ENCODE measurements at regions of chr5 and their contacts with region 1.

Region 1: GRCh38 chr5:157142317-157143126 is at the start of gene MED7:
- DNase-seq: peak; percentile 77 to 99 (median 88)
- ATAC-seq: peak; percentile 95
- H3K4me3 ChIP-seq: peak within 1 kb of the TSS; percentile 98
- H3K4me3 Mint-ChIP-seq: peak within 1 kb of the TSS; percentile 95
- H3K27ac ChIP-seq: peak within 1 kb of the TSS; percentile 88 to 94
- H3K27ac Mint-ChIP-seq: peak within 1 kb of the TSS; percentile 98
- H3K4me1 ChIP-seq: peaks cover 35% of the 10 kb centered on the region
- H3K4me1 Mint-ChIP-seq: peaks cover 57% of the 10 kb centered on the region
- H3K27me3 ChIP-seq: no peaks in the 10 kb centered on the region
- H3K27me3 Mint-ChIP-seq: no peaks in the 10 kb centered on the region
- CTCF ChIP-seq: no peak
- total RNA-seq, gene MED7: 7.0 to 8.7 TPM

Region 2: GRCh38 chr5:156722358-156722757 is 420.2 kb before region 1 on chr5:
- CTCF ChIA-PET with region 1: no interaction called
- POLR2A ChIA-PET with region 1: no interaction called
- intact Hi-C with region 1: no loop called
- DNase-seq: no peak
- ATAC-seq: no peak
- H3K4me3 ChIP-seq: no peak overlapping the region
- H3K4me3 Mint-ChIP-seq: no peak overlapping the region
- H3K27ac ChIP-seq: no peak overlapping the region
- H3K27ac Mint-ChIP-seq: no peak overlapping the region
- H3K4me1 ChIP-seq: no peaks in the 10 kb centered on the region
- H3K4me1 Mint-ChIP-seq: no peaks in the 10 kb centered on the region
- H3K27me3 ChIP-seq: no peaks in the 10 kb centered on the region
- H3K27me3 Mint-ChIP-seq: peaks cover 11% of the 10 kb centered on the region
- CTCF ChIP-seq: no peak

Region 3: GRCh38 chr5:157130925-157131324 is 11.6 kb before region 1 on chr5:
- CTCF ChIA-PET with region 1: interaction called, 7 read pairs
- POLR2A ChIA-PET with region 1: interaction called, 26 read pairs
- intact Hi-C with region 1: no loop called
- DNase-seq: no peak
- ATAC-seq: no peak
- H3K4me3 ChIP-seq: no peak overlapping the region
- H3K4me3 Mint-ChIP-seq: no peak overlapping the region
- H3K27ac ChIP-seq: no peak overlapping the region
- H3K27ac Mint-ChIP-seq: no peak overlapping the region
- H3K4me1 ChIP-seq: peaks cover 8% of the 10 kb centered on the region
- H3K4me1 Mint-ChIP-seq: peaks cover 33% of the 10 kb centered on the region
- H3K27me3 ChIP-seq: no peaks in the 10 kb centered on the region
- H3K27me3 Mint-ChIP-seq: no peaks in the 10 kb centered on the region
- CTCF ChIP-seq: no peak

Region 4: GRCh38 chr5:157189223-157189622 is 46.7 kb after region 1 on chr5:
- CTCF ChIA-PET with region 1: no interaction called
- POLR2A ChIA-PET with region 1: interaction called, 27 read pairs
- intact Hi-C with region 1: no loop called
- DNase-seq: peak in 1 of 14 experiments; percentile 42
- ATAC-seq: no peak
- H3K4me3 ChIP-seq: peak overlapping the region; percentile 85
- H3K4me3 Mint-ChIP-seq: peak overlapping the region; percentile 92
- H3K27ac ChIP-seq: peak overlapping the region; percentile 38 to 67
- H3K27ac Mint-ChIP-seq: peak overlapping the region; percentile 96
- H3K4me1 ChIP-seq: peaks cover 72% of the 10 kb centered on the region
- H3K4me1 Mint-ChIP-seq: peaks cover 92% of the 10 kb centered on the region
- H3K27me3 ChIP-seq: no peaks in the 10 kb centered on the region
- H3K27me3 Mint-ChIP-seq: no peaks in the 10 kb centered on the region
- CTCF ChIP-seq: no peak

Region 5: DNA sequence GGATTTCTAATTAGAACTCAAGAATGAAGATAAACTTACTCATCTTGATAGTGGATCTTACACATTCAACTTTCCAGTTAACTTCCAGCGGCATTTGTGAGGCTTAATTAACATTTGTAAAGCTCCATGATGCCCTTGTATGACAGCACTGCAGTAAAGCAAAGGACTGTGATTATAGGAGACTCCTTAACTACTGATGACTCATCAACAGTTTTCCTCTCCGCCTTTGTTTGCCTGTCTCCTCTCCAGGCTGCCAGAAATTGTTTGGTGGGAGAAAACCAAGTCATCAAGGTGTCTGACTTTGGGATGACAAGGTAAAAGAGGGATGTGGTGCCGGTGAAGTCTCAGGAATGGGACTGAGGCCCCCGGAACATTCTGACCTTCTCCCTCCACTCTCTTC is 103.0 kb after region 1 on chr5:
- CTCF ChIA-PET with region 1: no interaction called
- POLR2A ChIA-PET with region 1: interaction called, 25 read pairs
- intact Hi-C with region 1: loop called (anchors 5 kb)
- DNase-seq: no peak
- ATAC-seq: no peak
- H3K4me3 ChIP-seq: no peak overlapping the region
- H3K4me3 Mint-ChIP-seq: no peak overlapping the region
- H3K27ac ChIP-seq: no peak overlapping the region
- H3K27ac Mint-ChIP-seq: peak overlapping the region; percentile 91
- H3K4me1 ChIP-seq: peaks cover 60% of the 10 kb centered on the region
- H3K4me1 Mint-ChIP-seq: peaks cover 68% of the 10 kb centered on the region
- H3K27me3 ChIP-seq: no peaks in the 10 kb centered on the region
- H3K27me3 Mint-ChIP-seq: no peaks in the 10 kb centered on the region
- CTCF ChIP-seq: no peak

Region 6: DNA sequence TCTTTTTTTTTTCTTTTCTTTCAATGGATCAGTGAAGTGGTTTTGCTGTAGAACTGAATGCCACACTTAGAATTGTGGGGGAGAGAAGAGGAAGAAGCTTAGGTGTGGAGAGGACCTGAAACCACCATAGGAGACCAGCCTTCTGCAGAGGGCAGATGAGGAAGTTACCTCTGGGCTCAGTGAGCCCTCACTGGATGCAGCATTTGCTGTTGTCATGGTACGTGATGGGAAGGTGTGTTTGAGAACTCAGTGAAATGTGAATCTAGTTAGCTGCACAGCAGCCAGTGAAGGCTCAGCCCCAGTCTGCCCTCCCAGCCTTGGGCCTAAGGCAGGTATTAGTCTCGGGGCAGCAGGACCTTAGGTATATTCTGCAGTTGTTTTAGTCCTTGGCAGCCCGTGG is 140.9 kb after region 1 on chr5:
- CTCF ChIA-PET with region 1: no interaction called
- POLR2A ChIA-PET with region 1: interaction called, 17 read pairs
- intact Hi-C with region 1: no loop called
- DNase-seq: peak in 5 of 14 experiments; percentile 14 to 54 (median 52)
- ATAC-seq: peak; percentile 86
- H3K4me3 ChIP-seq: no peak overlapping the region
- H3K4me3 Mint-ChIP-seq: peak overlapping the region; percentile 52
- H3K27ac ChIP-seq: peak overlapping the region in 1 of 2 donors; percentile 24
- H3K27ac Mint-ChIP-seq: peak overlapping the region; percentile 83
- H3K4me1 ChIP-seq: peaks cover 66% of the 10 kb centered on the region
- H3K4me1 Mint-ChIP-seq: peaks cover 90% of the 10 kb centered on the region
- H3K27me3 ChIP-seq: no peaks in the 10 kb centered on the region
- H3K27me3 Mint-ChIP-seq: no peaks in the 10 kb centered on the region
- CTCF ChIP-seq: no peak

Region 7: GRCh38 chr5:157743163-157744050 is 600.9 kb after region 1 on chr5 and contains the start of gene LSM11:
- CTCF ChIA-PET with region 1: interaction called, 4 read pairs
- POLR2A ChIA-PET with region 1: no interaction called
- intact Hi-C with region 1: loop called in 1 of 2 experiments (anchors 5 kb)
- DNase-seq: peak; percentile 75 to 96 (median 88)
- ATAC-seq: peak; percentile 97
- H3K4me3 ChIP-seq: peak within 1 kb of the TSS; percentile 60
- H3K4me3 Mint-ChIP-seq: peak within 1 kb of the TSS; percentile 96
- H3K27ac ChIP-seq: no peak within 1 kb of the TSS
- H3K27ac Mint-ChIP-seq: peak within 1 kb of the TSS; percentile 68
- H3K4me1 ChIP-seq: peaks cover 20% of the 10 kb centered on the region
- H3K4me1 Mint-ChIP-seq: peaks cover 36% of the 10 kb centered on the region
- H3K27me3 ChIP-seq: no peaks in the 10 kb centered on the region
- H3K27me3 Mint-ChIP-seq: no peaks in the 10 kb centered on the region
- CTCF ChIP-seq: peak; percentile 99
- total RNA-seq, gene LSM11: 0.49 to 0.70 TPM